Activated naive CD4-positive, alpha-beta T cell treated with anti-CD3 and anti-CD28 coated beads for 36 hours (primary cell): ENCODE measurements at regions of chr2 and their contacts with region 1.

Region 1: DNA sequence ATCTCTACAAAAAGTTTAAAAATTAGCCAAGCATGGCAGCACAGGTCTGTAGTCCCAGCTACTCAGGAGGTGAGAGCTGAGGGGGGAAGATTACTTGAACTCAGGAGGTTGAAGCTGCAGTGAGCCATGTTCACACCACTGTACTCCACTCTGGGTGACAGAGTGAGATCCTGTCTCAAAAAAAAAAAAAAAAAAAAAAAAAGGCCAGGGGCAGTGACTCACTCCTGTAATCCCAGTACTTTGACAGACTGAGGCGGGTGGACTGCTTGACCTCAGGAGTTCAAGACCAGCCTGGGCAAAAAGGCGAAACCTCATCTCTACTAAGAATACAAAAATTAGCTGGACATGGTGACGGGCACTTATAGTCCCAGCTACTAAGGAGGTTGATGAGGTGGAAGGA is 37.0 kb downstream of the PUM2 start:
- DNase-seq: peak; percentile 9
- H3K4me3 Mint-ChIP-seq: no peak overlapping the region
- H3K27ac Mint-ChIP-seq: no peak overlapping the region
- H3K4me1 Mint-ChIP-seq: peaks cover 26% of the 10 kb centered on the region
- H3K27me3 Mint-ChIP-seq: no peaks in the 10 kb centered on the region

Region 2: GRCh38 chr2:20273045-20273444 is 40.6 kb before region 1 on chr2:
- CTCF ChIA-PET with region 1: interaction called, 3 read pairs
- intact Hi-C with region 1: loop called (anchors 5 kb)
- DNase-seq: no peak
- H3K4me3 Mint-ChIP-seq: no peak overlapping the region
- H3K27ac Mint-ChIP-seq: no peak overlapping the region
- H3K4me1 Mint-ChIP-seq: peaks cover 7% of the 10 kb centered on the region
- H3K27me3 Mint-ChIP-seq: no peaks in the 10 kb centered on the region

Region 3: DNA sequence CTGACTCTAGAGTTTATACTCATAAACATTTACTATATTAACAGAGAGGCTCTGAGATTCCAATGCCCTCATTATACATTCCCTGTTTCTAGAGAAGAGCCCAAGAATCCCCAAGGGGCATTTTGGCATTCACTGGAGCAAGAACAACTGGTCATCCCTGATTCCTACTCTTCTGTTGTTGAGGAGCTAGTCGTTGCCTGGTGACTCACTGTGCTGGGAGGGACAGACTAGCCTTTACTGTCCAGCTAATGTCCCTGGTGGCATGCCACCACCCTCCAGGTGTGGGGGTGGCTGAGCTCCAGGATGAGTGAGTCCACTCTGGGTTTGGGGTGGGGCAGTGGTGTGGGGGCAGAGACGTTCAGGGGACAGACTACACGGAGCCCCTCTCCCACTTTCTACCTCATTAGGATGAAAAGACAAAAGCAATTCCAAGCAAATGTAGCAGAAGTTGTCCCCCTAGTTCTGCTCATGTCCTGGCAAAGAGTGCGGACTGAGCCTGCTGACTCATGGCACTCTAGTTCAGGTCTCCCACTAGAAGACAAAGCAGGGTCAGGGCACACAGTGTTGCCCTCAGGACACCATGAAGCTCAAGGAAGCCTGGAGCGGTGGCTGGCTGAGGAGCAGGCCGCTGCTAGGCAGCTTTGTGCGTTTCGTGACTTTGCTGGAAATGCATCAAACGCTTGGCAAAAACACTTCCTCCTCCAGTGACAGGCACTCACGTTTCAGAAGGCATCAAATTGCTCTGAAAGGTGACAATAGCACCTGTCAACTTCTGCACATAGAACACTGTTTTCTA is 182.6 kb after region 1 on chr2:
- CTCF ChIA-PET with region 1: no interaction called
- intact Hi-C with region 1: no loop called
- DNase-seq: no peak
- H3K4me3 Mint-ChIP-seq: no peak overlapping the region
- H3K27ac Mint-ChIP-seq: no peak overlapping the region
- H3K4me1 Mint-ChIP-seq: peaks cover 4% of the 10 kb centered on the region
- H3K27me3 Mint-ChIP-seq: peaks cover 2% of the 10 kb centered on the region

Region 4: DNA sequence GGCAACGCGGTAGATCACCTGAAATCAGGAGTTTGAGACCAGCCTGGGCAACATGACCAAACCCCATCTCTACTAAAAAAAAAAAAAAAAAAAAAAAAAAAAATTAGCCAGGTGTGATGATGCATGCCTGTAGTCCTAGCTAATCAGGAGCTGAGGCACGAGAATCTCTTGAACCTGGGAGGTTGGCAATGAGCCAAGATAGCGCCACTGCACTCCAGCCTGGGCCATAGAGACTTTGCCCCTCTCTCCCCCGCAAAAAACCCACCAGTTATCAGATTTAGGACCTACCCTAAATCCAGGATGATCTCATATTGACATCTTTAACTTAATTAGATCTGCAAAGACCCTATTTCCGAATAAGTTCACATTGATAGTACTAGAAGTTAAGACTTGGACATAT is 538.5 kb after region 1 on chr2:
- CTCF ChIA-PET with region 1: no interaction called
- intact Hi-C with region 1: no loop called
- DNase-seq: no peak
- H3K4me3 Mint-ChIP-seq: no peak overlapping the region
- H3K27ac Mint-ChIP-seq: no peak overlapping the region
- H3K4me1 Mint-ChIP-seq: no peaks in the 10 kb centered on the region
- H3K27me3 Mint-ChIP-seq: peaks cover 7% of the 10 kb centered on the region